Naive thymus-derived CD4-positive, alpha-beta T cell (primary cell): ENCODE measurements at regions of chr13 and their contacts with region 1.

Region 1: DNA sequence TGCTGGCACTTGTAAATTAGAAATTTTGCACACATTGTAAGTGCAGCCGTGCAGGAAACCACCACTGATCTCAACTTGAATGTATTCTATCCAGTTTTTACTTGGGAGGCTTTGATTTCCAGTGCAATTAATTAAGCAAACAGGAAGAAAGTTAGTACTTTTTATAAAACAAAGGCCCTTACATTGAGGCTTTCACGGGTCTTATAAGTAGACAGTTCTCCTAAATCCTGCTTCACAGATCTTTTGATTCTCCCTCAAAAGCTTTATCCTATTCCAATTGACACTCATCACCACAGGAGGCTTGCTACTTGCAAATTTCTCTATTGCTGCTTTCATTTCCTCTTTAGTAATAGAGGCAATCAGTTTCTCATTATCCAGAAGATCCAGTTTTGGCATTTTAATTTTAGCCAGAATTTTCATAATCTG is 90.1 kb downstream of the ERCC5 start:
- DNase-seq: no peak
- ATAC-seq: no peak
- H3K4me3 ChIP-seq: no peak overlapping the region
- H3K4me3 Mint-ChIP-seq: no peak overlapping the region
- H3K27ac ChIP-seq: no peak overlapping the region
- H3K27ac Mint-ChIP-seq: no peak overlapping the region
- H3K4me1 ChIP-seq: no peaks in the 10 kb centered on the region
- H3K4me1 Mint-ChIP-seq: no peaks in the 10 kb centered on the region
- H3K27me3 ChIP-seq: no peaks in the 10 kb centered on the region
- H3K27me3 Mint-ChIP-seq: peaks cover 0 to 36% (median 27%) of the 10 kb centered on the region in 5 donors

Region 2: DNA sequence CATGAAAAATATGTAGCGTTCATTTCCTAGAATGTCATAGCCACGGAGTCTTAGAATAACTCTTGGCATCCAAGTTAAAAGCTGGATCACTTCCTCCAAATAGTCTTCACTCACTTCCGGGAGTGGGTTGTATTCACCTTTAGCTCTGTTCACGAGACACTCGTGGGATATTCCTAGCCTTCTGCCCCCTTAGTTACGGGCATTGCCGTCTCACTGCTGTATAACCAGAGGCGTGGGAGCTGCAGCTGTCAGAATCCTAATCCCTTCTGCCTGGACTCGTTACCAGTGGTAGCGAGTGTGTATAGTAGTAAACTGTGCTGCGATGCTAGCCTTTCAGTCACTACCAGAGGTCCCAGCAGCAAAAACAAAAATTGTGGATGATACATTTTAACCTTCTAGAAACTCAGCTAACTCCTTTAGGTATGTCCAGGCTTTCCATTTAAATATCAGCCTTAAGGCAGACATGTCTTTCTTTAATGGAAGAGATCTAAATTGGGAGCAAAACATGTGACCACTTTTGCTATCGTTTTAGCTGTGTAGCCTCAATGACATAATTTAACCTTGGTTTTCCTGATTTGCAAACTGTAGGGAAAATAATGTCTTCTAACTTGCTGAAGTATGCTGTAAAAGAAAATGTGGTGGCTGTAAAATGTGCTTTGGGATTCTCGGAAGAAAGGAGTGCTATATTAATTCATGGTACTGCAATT is 56.0 kb before region 1 on chr13:
- CTCF ChIA-PET with region 1: no interaction called
- POLR2A ChIA-PET with region 1: no interaction called
- intact Hi-C with region 1: loop called in 1 of 2 experiments (anchors 5 kb)
- DNase-seq: no peak
- ATAC-seq: no peak
- H3K4me3 ChIP-seq: no peak overlapping the region
- H3K4me3 Mint-ChIP-seq: no peak overlapping the region
- H3K27ac ChIP-seq: no peak overlapping the region
- H3K27ac Mint-ChIP-seq: no peak overlapping the region
- H3K4me1 ChIP-seq: no peaks in the 10 kb centered on the region
- H3K4me1 Mint-ChIP-seq: peaks cover 0 to 9% (median 0%) of the 10 kb centered on the region in 7 donors
- H3K27me3 ChIP-seq: no peaks in the 10 kb centered on the region
- H3K27me3 Mint-ChIP-seq: no peaks in the 10 kb centered on the region